PC-9 (cell line): ENCODE measurements at regions of chr2 and their contacts with region 1.

Region 1: GRCh38 chr2:182933629-182934028 is 67.2 kb upstream of the FRZB start:
- DNase-seq: no peak
- H3K4me3 ChIP-seq: no peak overlapping the region
- H3K27ac ChIP-seq: no peak overlapping the region
- H3K4me1 ChIP-seq: no peaks in the 10 kb centered on the region
- H3K27me3 ChIP-seq: no peaks in the 10 kb centered on the region
- CTCF ChIP-seq: no peak

Region 2: DNA sequence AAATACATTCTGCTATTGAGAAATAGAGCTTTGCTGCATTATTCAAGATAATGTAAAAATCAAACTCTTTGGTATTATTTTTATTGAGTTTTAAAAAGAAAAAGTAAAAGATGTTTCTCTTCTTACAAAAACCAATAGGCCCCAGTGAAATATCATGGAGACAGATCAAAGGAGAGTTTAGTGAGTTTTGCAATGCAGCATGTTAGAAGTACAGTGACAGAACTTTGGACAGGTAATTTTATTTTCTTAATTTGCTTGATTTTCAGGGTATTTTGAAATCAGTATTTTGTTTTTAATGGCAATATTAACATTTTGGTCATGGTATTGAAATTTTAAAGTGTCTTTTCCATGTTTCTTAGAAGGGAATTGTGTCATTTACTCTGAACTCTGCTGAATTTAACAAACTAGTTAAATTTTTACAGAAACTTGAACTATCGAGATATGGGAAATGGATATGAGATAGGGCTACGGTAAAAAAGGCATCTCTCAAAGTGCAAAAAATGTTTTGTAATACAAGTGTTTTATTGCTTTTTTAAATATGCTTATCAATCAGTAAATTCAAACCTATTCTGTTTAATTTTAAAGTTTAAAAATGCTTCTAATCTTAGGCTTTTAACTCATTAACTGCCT is 203.8 kb before region 1 on chr2:
- CTCF ChIA-PET with region 1: no interaction called
- POLR2A ChIA-PET with region 1: no interaction called
- intact Hi-C with region 1: loop called (anchors 5 kb)
- DNase-seq: no peak
- H3K4me3 ChIP-seq: no peak overlapping the region
- H3K27ac ChIP-seq: no peak overlapping the region
- H3K4me1 ChIP-seq: no peaks in the 10 kb centered on the region
- H3K27me3 ChIP-seq: no peaks in the 10 kb centered on the region
- CTCF ChIP-seq: no peak

Region 3: GRCh38 chr2:182758379-182758778 is 175.2 kb before region 1 on chr2:
- CTCF ChIA-PET with region 1: no interaction called
- POLR2A ChIA-PET with region 1: interaction called, 4 read pairs
- intact Hi-C with region 1: loop called (anchors 5 kb)
- DNase-seq: no peak
- H3K4me3 ChIP-seq: no peak overlapping the region
- H3K27ac ChIP-seq: no peak overlapping the region
- H3K4me1 ChIP-seq: no peaks in the 10 kb centered on the region
- H3K27me3 ChIP-seq: no peaks in the 10 kb centered on the region
- CTCF ChIP-seq: no peak

Region 4: DNA sequence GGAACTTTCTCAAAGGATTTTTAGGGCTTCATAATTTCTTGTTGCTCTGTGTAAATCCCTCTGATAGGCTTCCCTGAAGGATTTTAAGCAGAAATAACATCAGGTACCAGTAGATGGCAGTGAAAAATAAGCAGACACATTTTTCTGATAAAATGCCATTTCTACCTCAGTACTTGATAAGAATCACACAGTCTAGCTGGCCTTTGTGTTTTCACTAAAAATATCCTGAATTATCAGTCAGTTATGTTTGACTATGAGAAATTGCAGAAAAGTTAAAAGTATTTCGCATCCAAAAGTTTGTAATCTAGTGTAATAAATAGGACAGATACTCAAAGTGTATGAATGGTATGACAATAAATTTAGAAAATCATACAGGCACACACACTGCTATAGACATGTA is 148.9 kb before region 1 on chr2:
- CTCF ChIA-PET with region 1: no interaction called
- POLR2A ChIA-PET with region 1: no interaction called
- intact Hi-C with region 1: loop called (anchors 10 kb)
- DNase-seq: peak in 1 of 2 experiments; percentile 46
- H3K4me3 ChIP-seq: no peak overlapping the region
- H3K27ac ChIP-seq: no peak overlapping the region
- H3K4me1 ChIP-seq: no peaks in the 10 kb centered on the region
- H3K27me3 ChIP-seq: no peaks in the 10 kb centered on the region
- CTCF ChIP-seq: peak; percentile 81

Region 5: GRCh38 chr2:182994228-182994912 is 60.7 kb after region 1 on chr2:
- CTCF ChIA-PET with region 1: no interaction called
- POLR2A ChIA-PET with region 1: no interaction called
- intact Hi-C with region 1: loop called (anchors 5 kb)
- DNase-seq: no peak
- H3K4me3 ChIP-seq: no peak overlapping the region
- H3K27ac ChIP-seq: no peak overlapping the region
- H3K4me1 ChIP-seq: no peaks in the 10 kb centered on the region
- H3K27me3 ChIP-seq: no peaks in the 10 kb centered on the region
- CTCF ChIP-seq: no peak

Region 6: GRCh38 chr2:183105402-183106134 is 171.9 kb after region 1 on chr2:
- CTCF ChIA-PET with region 1: no interaction called
- POLR2A ChIA-PET with region 1: no interaction called
- intact Hi-C with region 1: no loop called
- DNase-seq: no peak
- H3K4me3 ChIP-seq: no peak overlapping the region
- H3K27ac ChIP-seq: no peak overlapping the region
- H3K4me1 ChIP-seq: 0 out of 2 replicates have a peak, but pooled peaks cover 5% of the 10 kb centered on the region
- H3K27me3 ChIP-seq: no peaks in the 10 kb centered on the region
- CTCF ChIP-seq: no peak